Heart left ventricle (tissue), 16 donors: ENCODE measurements at regions of chr17 and their contacts with region 1.

Region 1: GRCh38 chr17:35889818-35890763 is 9.9 kb upstream of the CCL5 start:
- DNase-seq: peak in 2 of 5 donors; percentile 12 to 39
- ATAC-seq: no peak
- H3K4me3 ChIP-seq: no peak overlapping the region
- H3K27ac ChIP-seq: peak overlapping the region in 2 of 12 donors; percentile 17 to 78
- H3K4me1 ChIP-seq: peaks cover 0 to 39% (median 0%) of the 10 kb centered on the region in 12 donors
- H3K27me3 ChIP-seq: peaks cover 0 to 6% (median 0%) of the 10 kb centered on the region in 9 donors
- CTCF ChIP-seq: no peak
- POLR2A ChIP-seq: no peak

Region 2: DNA sequence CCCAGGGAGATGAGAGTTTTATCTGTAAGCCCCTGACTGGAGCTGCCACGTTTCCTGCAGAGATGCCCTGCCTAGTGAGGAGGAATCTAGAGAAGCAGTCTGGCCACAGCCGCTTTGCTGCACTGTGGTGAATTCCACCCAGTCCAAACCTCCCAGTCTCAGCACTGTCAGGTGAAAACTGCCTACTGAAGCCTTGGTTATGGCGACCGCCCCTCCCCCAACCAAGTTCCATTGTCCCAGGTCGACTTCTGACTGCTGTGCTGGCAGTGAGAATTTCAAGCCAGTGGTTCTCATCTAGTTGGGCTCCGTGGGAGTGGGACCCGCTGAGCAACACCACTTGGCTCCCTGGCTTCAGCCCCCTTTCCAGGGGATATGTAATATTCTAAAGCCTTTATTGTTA is 63.6 kb after region 1 on chr17:
- intact Hi-C with region 1: loop called in 1 of 10 experiments (anchors 10 kb)
- DNase-seq: no peak
- ATAC-seq: no peak
- H3K4me3 ChIP-seq: no peak overlapping the region
- H3K27ac ChIP-seq: no peak overlapping the region
- H3K4me1 ChIP-seq: no peaks in the 10 kb centered on the region
- H3K27me3 ChIP-seq: peaks cover 0 to 16% (median 0%) of the 10 kb centered on the region in 9 donors
- CTCF ChIP-seq: no peak
- POLR2A ChIP-seq: no peak

Region 3: DNA sequence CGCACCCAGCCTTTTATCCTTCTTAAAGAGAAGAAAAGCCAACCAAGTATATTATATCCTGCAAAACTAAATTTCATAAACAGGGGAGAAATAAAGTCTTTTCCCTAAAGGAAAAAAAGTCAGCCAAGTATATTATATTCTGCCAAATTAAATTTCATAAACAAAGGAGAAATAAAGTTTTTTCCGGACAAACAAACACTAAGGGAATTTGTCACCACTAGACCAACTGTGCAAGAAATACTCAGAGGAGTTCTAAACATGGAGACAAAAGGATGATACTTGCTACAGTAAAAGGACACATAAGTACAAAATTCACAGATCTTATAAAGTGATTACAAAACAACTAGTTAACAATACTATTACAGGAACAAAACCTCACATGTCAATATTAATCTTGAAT is 159.6 kb after region 1 on chr17:
- intact Hi-C with region 1: loop called in 1 of 10 experiments (anchors 5 kb)
- DNase-seq: no peak
- ATAC-seq: no peak
- H3K4me3 ChIP-seq: no peak overlapping the region
- H3K27ac ChIP-seq: no peak overlapping the region
- H3K4me1 ChIP-seq: peaks cover 0 to under 1% (median 0%) of the 10 kb centered on the region in 12 donors
- H3K27me3 ChIP-seq: peaks cover 0 to 17% (median 0%) of the 10 kb centered on the region in 9 donors
- CTCF ChIP-seq: no peak
- POLR2A ChIP-seq: no peak